Ovary (tissue), 10 donors: ENCODE measurements at regions of chr4 and their contacts with region 1.

Region 1: DNA sequence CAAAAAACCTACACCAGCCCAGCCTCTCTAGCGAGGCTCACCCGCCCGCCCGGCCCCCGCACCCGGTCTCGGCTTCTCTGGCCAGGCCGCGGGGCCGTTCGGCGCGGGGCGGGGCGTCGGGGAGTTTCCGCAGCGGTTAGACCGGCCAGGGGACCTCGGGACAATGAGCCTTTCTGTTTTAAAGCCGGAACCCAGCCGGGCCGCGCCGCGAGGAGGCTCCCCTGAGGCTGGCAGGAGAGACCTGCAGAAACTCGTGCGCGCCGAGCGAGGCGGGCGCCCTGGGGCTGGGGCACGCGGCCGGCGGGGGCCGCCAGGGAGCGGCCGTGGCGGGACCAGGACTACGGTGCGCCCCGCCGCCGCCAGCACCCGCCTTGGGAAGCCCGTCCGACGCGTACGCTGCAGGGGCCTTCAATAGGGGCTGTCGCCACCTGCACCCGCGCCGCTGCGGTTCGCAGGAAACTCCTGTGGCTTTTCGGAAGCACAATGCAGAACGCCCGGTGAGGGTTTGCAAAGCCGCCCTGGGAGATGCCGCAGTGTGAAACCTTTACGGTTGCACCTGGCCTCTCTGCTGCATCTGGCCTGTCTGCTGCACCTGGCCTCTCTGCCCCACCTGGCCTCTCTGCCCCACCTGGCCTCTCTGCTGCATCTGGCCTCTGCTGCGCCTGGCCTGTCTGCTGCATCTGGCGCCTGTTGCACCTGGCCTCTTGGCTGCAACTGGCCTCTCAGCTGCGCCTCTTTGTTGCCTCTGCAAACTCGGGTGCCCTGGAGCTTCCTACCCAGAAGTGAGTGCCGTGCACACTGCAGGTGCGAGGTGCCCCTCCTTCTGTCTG is 63.9 kb downstream of the TRAPPC11 start:
- DNase-seq: peak; percentile 51 to 74 (median 56)
- H3K4me3 ChIP-seq: peak overlapping the region; percentile 42
- H3K27ac ChIP-seq: peak overlapping the region; percentile 2 to 26
- H3K4me1 ChIP-seq: peaks cover 3% of the 10 kb centered on the region
- H3K27me3 ChIP-seq: no peaks in the 10 kb centered on the region
- CTCF ChIP-seq: no peak
- EP300 ChIP-seq: no peak
- POLR2A ChIP-seq: no peak

Region 2: GRCh38 chr4:183471946-183472708 is 250.8 kb before region 1 on chr4:
- intact Hi-C with region 1: loop called in 1 of 4 experiments (anchors 10 kb)
- DNase-seq: peak; percentile 87 to 96 (median 91)
- H3K4me3 ChIP-seq: peak overlapping the region; percentile 4
- H3K27ac ChIP-seq: no peak overlapping the region
- H3K4me1 ChIP-seq: no peaks in the 10 kb centered on the region
- H3K27me3 ChIP-seq: no peaks in the 10 kb centered on the region
- CTCF ChIP-seq: peak; percentile 63 to 85 (median 82)
- EP300 ChIP-seq: no peak
- POLR2A ChIP-seq: no peak